A549 (cell line): ENCODE measurements at regions of chr7 and their contacts with region 1.

Region 1: GRCh38 chr7:105336009-105336408 is 52.7 kb downstream of the SRPK2 start:
- DNase-seq: no peak
- ATAC-seq: no peak
- H3K4me3 ChIP-seq: no peak overlapping the region
- H3K27ac ChIP-seq: no peak overlapping the region
- H3K4me1 ChIP-seq: 0 out of 3 replicates have a peak, but pooled peaks cover 3% of the 10 kb centered on the region
- CTCF ChIP-seq: peak; percentile 41; the same call in 2 of the 3 replicates
- EP300 ChIP-seq: no peak
- POLR2A ChIP-seq: no peak
- RAD21 ChIP-seq: peak; percentile 53 to 68

Region 2: DNA sequence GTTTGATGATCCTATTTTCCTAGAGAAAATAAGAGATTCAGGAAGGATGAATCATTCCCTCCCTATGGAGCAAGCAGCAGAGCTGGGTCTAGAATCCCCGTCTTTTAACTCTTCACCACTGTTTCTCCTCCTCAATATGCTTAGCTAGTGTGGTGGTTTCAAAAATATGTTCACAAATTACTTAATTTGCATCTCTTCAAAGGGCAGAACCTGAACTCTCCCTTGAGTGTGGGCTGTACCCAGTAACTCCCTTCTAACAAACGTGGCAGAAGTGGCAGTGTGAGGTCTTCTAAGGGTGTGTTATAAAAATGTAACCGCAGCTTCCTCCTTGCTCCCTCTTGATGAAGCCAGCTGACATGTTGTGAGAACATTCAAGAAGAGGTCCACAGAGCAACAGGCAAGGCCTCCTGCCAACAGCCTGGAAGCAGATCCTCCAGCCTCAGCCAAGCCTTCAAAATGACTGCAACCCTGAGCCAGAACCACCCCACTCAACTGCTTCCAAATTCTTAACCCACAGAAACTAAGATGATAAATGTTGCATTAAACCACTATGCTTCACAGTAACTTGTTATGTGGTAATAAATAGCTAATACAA is 16.1 kb after region 1 on chr7:
- CTCF ChIA-PET with region 1: interaction called, 11 read pairs
- POLR2A ChIA-PET with region 1: no interaction called
- DNase-seq: no peak
- ATAC-seq: peak; percentile 68 to 71
- H3K4me3 ChIP-seq: no peak overlapping the region
- H3K27ac ChIP-seq: peak overlapping the region in 1 of 2 experiments; percentile 64; a peak in 3 of 6 replicates
- H3K4me1 ChIP-seq: peaks cover 21% of the 10 kb centered on the region
- CTCF ChIP-seq: no peak
- EP300 ChIP-seq: no peak
- POLR2A ChIP-seq: no peak
- RAD21 ChIP-seq: no peak

Region 3: DNA sequence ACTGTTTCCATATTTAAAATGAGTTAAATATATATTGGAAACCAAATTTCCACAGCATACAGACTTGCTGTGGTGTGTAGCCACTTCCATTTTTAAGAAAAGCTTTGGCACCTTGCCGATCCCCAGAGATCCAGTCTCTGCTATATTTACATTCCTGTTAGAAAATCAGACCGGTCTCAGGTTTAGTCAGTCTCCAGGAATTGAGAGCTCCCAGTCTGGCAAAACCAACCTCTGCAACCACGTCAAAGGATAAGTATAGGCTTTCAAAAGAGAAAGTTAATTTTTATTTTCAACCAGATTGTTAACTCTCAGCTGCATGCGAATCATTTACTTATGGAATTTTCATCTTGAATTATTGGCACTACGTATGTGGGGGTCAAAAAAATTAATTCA is 157.9 kb after region 1 on chr7:
- CTCF ChIA-PET with region 1: no interaction called
- POLR2A ChIA-PET with region 1: no interaction called
- DNase-seq: peak in 1 of 2 experiments; percentile 50
- ATAC-seq: peak; percentile 80 to 81; a peak in 5 of 6 replicates
- H3K4me3 ChIP-seq: no peak overlapping the region
- H3K27ac ChIP-seq: peak overlapping the region; percentile 57 to 74
- H3K4me1 ChIP-seq: peaks cover 54% of the 10 kb centered on the region
- CTCF ChIP-seq: no peak
- EP300 ChIP-seq: 0 out of 5 replicates have a peak, but pooled peaks of 1 of the 2 experiments have one; percentile 19
- POLR2A ChIP-seq: no peak
- RAD21 ChIP-seq: no peak